Heart left ventricle (tissue), 16 donors: ENCODE measurements at regions of chr3 and their contacts with region 1.

Region 1: DNA sequence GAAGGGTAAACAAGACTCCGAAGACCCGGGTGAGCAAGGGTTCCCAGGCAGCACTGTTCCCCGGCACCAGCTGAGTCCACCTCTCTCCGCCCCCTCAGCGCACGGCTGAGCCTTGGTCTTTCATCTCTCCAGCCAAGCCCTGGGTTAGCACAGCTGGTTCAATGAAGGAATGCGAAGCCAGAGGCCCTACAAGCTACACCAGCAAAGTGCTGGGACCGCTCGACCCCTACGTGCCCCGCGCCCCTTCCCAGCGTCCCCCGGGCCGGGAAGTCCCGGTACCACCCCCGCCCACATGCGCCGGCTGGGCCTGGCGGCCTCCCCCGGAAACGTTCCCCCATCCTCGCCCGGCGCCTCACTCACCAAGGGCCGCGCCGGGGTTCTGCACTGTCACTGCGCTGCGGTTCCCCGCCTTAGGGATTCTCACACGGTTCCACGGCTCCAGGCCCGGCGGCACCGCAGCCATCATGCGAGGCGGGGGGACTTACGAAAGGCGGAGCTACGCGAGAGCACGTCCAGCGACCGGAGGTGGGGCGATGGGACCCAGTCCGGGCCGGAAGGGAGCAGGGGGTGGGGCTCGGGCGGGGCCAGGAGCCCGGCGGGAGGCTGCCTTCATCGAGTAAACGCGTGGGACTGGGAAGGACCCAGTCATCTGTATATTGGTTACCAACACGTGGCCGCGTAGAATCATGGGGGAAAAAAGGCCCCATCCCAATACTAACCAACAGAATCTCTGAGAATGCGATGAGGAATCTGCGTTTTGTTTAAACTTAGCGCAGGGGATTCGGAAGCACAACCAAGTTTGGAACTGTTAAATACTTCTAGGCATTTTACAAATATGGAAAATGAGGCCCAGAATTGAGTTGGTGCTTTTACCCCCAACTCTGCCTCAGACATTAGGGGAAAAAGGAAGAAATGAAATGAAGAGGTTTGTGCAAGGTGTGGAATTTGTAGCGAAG is 28.7 kb downstream of the GTPBP8 start:
- DNase-seq: peak; percentile 90 to 94 (median 92)
- ATAC-seq: peak; percentile 94 to 99 (median 98)
- H3K4me3 ChIP-seq: peak overlapping the region; percentile 40 to 98 (median 81)
- H3K27ac ChIP-seq: peak overlapping the region; percentile 79 to 99 (median 96)
- H3K4me1 ChIP-seq: peaks cover 0 to 38% (median 19%) of the 10 kb centered on the region in 12 donors
- H3K27me3 ChIP-seq: no peaks in the 10 kb centered on the region
- CTCF ChIP-seq: no peak
- POLR2A ChIP-seq: peak in 1 of 2 donors; percentile 57

Region 2: DNA sequence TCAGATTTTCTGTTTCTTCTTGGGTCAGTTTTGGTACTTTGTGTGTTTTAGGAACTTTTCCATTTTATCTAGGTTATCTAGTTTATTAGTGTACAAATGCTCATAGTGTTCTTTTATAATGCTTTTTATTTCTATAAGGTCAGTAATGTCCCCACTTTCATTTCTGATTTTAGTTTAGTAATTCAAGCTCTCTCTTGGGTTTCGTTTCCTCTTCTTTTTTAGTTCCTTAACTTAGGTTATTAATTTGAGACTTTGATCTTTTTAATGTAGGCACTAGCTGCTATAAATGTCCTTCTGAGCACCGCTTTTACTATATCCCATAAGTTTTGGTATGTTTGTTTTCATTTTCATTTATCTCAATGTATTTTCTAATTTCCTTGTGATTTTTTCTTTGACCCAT is 145.8 kb before region 1 on chr3:
- intact Hi-C with region 1: no loop called
- DNase-seq: no peak
- ATAC-seq: no peak
- H3K4me3 ChIP-seq: no peak overlapping the region
- H3K27ac ChIP-seq: no peak overlapping the region
- H3K4me1 ChIP-seq: peaks cover 0 to 13% (median 0%) of the 10 kb centered on the region in 12 donors
- H3K27me3 ChIP-seq: no peaks in the 10 kb centered on the region
- CTCF ChIP-seq: no peak
- POLR2A ChIP-seq: no peak

Region 3: GRCh38 chr3:112990672-112991602 is 28.5 kb before region 1 on chr3 and contains the start of gene GTPBP8:
- intact Hi-C with region 1: loop called in 1 of 10 experiments (anchors 1 kb)
- DNase-seq: peak; percentile 91 to 96 (median 95)
- ATAC-seq: peak; percentile 96 to 99 (median 99)
- H3K4me3 ChIP-seq: peak within 1 kb of the TSS; percentile 47 to 94 (median 84)
- H3K27ac ChIP-seq: peak within 1 kb of the TSS; percentile 73 to 98 (median 95)
- H3K4me1 ChIP-seq: peaks cover 0 to 24% (median 17%) of the 10 kb centered on the region in 12 donors
- H3K27me3 ChIP-seq: no peaks in the 10 kb centered on the region
- CTCF ChIP-seq: peak in 5 of 12 donors; percentile 5 to 21 (median 7)
- POLR2A ChIP-seq: peak; percentile 75 to 93
- total RNA-seq, gene GTPBP8: 17.3 to 52.2 (median 24.6) TPM

Region 4: GRCh38 chr3:113002679-113003078 is 16.8 kb before region 1 on chr3:
- intact Hi-C with region 1: no loop called
- DNase-seq: no peak
- ATAC-seq: peak in 2 of 4 donors; percentile 20 to 38
- H3K4me3 ChIP-seq: no peak overlapping the region
- H3K27ac ChIP-seq: no peak overlapping the region
- H3K4me1 ChIP-seq: peaks cover 0 to 5% (median 0%) of the 10 kb centered on the region in 12 donors
- H3K27me3 ChIP-seq: no peaks in the 10 kb centered on the region
- CTCF ChIP-seq: no peak
- POLR2A ChIP-seq: no peak